Aorta (tissue), 5 donors: ENCODE measurements at regions of chr17 and their contacts with region 1.

Region 1: GRCh38 chr17:73429440-73430164 is 117.8 kb upstream of the CDC42EP4 start:
- DNase-seq: peak; percentile 93 to 97
- ATAC-seq: peak; percentile 89
- H3K4me3 ChIP-seq: no peak overlapping the region
- H3K27ac ChIP-seq: no peak overlapping the region
- H3K4me1 ChIP-seq: no peaks in the 10 kb centered on the region
- H3K27me3 ChIP-seq: no peaks in the 10 kb centered on the region

Region 2: GRCh38 chr17:73455050-73455687 is 25.6 kb after region 1 on chr17:
- intact Hi-C with region 1: no loop called
- DNase-seq: peak; percentile 69 to 81
- ATAC-seq: peak; percentile 78
- H3K4me3 ChIP-seq: no peak overlapping the region
- H3K27ac ChIP-seq: no peak overlapping the region
- H3K4me1 ChIP-seq: no peaks in the 10 kb centered on the region
- H3K27me3 ChIP-seq: no peaks in the 10 kb centered on the region

Region 3: GRCh38 chr17:73645050-73645978 is 215.7 kb after region 1 on chr17:
- intact Hi-C with region 1: loop called in 1 of 2 experiments (anchors 10 kb)
- DNase-seq: peak; percentile 63 to 85
- ATAC-seq: peak; percentile 71
- H3K4me3 ChIP-seq: peak overlapping the region; percentile 48 to 74
- H3K27ac ChIP-seq: peak overlapping the region in 1 of 2 donors; percentile 1
- H3K4me1 ChIP-seq: peaks cover 0 to 4% of the 10 kb centered on the region in 2 donors
- H3K27me3 ChIP-seq: no peaks in the 10 kb centered on the region

Region 4: DNA sequence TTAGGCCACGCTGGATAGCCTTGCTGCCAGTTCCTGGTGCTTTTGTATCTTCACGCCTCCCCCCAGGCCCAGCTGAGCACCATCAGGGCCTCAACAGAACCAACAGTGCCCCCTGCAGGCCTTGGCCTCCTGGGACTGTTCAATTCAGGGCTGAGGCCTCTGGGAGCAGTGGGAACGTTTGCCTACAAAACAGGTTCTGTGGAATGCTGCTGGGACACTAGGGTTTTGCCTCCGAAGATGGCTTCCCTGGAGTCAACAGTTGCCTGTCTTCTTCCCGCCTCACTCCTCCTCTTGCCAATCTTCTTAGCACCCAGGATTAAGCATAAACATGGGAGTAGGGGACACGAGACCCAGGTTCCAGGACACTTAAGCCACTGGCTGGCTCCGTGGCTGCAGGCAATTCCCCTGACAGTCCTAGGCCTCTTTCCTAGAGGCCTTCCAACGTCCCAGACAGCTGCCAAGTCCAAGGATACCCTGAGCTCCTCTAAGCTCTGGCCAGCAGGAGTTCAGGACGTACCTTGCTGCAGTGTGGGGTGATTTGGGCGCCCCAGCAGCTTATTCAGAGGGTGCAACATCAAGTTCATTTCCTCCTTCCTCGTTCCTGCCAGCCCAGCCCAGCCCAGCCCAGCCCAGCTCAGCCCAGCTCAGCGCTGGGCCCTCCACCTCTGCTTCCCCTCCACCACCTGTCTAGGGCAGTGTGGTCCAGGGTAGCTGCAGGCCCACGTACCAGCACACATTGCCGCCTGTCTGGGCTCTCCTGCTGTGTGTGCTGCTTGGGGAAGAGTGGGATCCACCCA is 527.3 kb after region 1 on chr17:
- intact Hi-C with region 1: loop called in 1 of 2 experiments (anchors 2 kb)
- DNase-seq: no peak
- ATAC-seq: no peak
- H3K4me3 ChIP-seq: no peak overlapping the region
- H3K27ac ChIP-seq: no peak overlapping the region
- H3K4me1 ChIP-seq: no peaks in the 10 kb centered on the region
- H3K27me3 ChIP-seq: no peaks in the 10 kb centered on the region

Region 5: DNA sequence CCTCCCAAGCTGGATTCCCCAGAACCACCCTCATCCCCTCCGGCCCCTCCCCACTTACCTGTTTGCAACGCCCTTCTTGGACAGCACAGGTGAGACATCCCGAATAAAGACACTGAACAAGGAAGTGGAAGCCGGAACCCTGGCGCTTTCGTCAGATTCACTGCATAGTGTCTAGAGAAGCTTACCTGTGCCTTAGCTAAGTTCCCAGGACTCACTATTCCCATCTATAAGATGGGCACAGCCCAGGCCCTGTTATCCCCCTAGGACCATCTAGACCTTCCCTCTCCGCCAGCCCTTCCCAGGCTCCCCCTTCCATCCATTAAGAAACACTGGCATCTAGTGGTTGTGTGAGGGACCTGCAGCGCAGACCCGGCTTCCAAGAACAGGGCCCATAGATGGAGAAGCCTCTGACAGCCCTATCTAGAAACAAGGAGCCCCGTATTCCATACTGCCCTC is 747.0 kb after region 1 on chr17:
- intact Hi-C with region 1: loop called (anchors 2 to 5 kb)
- DNase-seq: peak; percentile 58 to 81
- ATAC-seq: peak; percentile 66
- H3K4me3 ChIP-seq: no peak overlapping the region
- H3K27ac ChIP-seq: no peak overlapping the region
- H3K4me1 ChIP-seq: no peaks in the 10 kb centered on the region
- H3K27me3 ChIP-seq: no peaks in the 10 kb centered on the region